Right cardiac atrium (tissue), 5 donors: ENCODE measurements at regions of chr17 and their contacts with region 1.

Region 1: DNA sequence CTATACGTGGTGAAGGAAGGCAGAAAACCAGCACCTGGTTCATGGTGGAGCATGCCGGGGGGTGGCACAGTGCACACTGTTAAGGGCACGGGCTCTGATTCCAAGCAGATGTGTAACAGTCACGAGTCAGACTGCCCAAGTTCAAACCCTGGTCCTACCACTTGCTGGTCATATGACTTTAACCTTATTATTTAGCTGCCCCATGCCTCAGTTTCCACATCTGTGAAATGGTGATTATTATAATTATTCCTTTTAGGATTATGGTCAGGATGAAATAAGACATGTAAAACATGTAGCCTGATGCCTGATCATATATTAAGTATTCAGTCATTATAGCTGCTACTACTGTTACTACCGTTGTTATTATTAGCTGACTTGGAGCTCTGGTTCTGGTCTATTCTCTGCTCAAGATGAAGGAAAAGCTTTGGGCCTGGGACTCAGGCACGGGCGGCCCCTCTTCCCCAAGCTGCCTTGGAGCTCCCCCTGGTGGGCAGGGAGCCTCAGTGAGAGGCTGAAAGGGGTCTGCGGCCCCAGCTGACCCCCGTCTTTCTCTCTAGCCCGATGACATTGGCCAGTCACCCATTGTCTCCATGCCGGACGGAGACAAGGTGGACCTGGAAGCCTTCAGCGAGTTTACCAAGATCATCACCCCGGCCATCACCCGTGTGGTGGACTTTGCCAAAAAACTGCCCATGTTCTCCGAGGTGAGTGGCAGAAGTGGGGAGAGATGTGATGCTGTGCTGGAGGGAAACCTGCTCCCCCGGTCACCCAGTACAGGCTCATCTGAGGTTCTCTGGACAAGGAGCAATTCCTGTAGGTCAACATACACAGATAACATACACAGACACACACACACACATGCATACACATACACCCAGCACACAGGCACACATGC is 14.0 kb downstream of the NR1D1 start:
- DNase-seq: peak in 2 of 3 donors; percentile 86 to 88
- ATAC-seq: peak in 1 of 2 donors; percentile 40
- H3K4me3 ChIP-seq: no peak overlapping the region
- H3K27ac ChIP-seq: peak overlapping the region; percentile 43
- H3K4me1 ChIP-seq: peaks cover 4% of the 10 kb centered on the region
- H3K27me3 ChIP-seq: no peaks in the 10 kb centered on the region

Region 2: DNA sequence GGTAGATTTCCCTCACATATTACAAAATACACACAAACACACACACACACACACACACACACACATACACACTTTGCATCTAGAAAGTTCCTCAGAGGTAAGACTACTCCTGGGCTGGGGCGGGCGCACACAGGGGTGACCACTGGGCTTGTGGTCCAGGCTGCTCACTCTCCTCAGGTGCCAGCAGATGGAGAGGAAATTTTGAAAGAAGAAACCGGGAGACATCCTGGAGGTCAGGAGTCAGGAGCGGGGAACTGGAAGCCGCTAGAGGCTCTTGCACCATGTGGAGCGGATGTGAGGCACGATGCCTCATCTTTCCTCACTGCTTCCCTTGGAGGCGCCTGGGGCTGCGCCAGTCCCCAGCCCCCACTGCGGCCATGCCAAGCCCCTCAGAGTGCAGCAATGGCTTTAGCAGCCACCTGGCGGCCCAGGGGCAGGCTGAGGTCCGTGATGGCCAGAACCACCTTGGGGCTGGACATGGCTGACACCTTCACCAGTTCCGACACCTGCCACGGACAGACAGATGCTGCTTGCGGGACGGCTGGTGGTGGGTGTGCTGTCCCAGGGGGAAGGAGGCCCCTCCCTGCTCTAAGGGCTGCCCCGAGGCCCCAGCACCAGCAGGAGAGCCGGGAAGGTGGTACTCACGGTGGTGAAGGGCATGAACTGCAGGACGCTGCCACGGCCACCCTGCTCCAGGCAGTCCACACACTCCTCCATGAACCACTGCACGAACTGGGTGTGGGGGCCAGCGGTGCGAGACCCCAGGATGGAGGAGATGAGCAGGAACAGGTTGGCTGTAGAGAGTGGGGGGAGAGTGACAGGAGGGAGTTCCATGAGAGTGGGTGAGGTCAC is 67.0 kb before region 1 on chr17:
- intact Hi-C with region 1: loop called in 2 of 4 experiments (anchors 10 kb)
- DNase-seq: peak; percentile 38 to 71 (median 65)
- ATAC-seq: no peak
- H3K4me3 ChIP-seq: no peak overlapping the region
- H3K27ac ChIP-seq: no peak overlapping the region
- H3K4me1 ChIP-seq: peaks cover 10% of the 10 kb centered on the region
- H3K27me3 ChIP-seq: no peaks in the 10 kb centered on the region

Region 3: DNA sequence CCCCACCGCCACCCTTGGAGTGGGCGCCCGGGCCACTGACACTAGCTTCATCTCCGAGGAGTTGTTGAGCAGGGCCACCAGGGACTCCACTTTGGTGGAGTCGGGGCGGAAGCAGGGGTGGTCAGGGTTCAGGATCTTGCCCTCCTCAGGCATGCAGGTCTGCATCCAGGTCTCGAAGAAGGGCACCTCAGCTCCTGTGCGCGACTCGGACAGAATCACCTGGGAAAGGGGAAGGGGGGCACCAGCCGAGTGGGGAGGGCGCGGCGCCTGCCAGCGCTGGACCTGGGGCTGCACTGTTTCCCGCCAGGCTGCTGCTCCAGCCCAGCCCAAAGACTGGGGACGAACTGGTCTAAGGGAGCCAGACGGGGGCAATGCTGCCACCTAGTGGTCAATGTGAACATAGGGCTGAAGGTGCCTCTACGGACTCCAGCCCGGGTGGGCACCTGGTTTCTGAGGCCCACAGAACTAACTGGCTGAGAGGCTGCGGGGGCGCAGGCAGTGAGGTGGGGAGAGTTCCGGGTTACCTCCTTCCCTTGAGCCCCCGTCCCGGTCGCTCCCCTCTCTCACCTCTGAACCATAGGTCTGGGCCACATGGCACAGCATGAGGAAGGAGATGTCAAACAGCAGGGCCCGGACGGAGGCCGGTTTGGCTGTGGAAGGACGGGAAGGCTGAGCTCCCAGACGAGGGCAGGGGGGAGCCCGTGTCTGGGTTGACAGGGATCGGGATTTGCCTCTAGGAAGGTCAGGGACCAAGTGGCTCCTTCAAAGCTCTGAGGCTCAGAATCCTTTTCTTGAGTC is 59.4 kb before region 1 on chr17:
- intact Hi-C with region 1: loop called in 1 of 4 experiments (anchors 10 kb)
- DNase-seq: peak; percentile 86 to 90 (median 90)
- ATAC-seq: peak; percentile 87 to 90
- H3K4me3 ChIP-seq: no peak overlapping the region
- H3K27ac ChIP-seq: no peak overlapping the region
- H3K4me1 ChIP-seq: no peaks in the 10 kb centered on the region
- H3K27me3 ChIP-seq: no peaks in the 10 kb centered on the region

Region 4: GRCh38 chr17:40038882-40039513 is 47.4 kb before region 1 on chr17:
- intact Hi-C with region 1: loop called in 1 of 4 experiments (anchors 5 kb)
- DNase-seq: peak; percentile 77 to 88 (median 86)
- ATAC-seq: peak; percentile 92 to 96
- H3K4me3 ChIP-seq: no peak overlapping the region
- H3K27ac ChIP-seq: peak overlapping the region; percentile 87
- H3K4me1 ChIP-seq: peaks cover 3% of the 10 kb centered on the region
- H3K27me3 ChIP-seq: no peaks in the 10 kb centered on the region

Region 5: GRCh38 chr17:40062329-40063186 is 23.8 kb before region 1 on chr17 and contains the start of gene THRA:
- intact Hi-C with region 1: loop called in 1 of 4 experiments (anchors 2 kb)
- DNase-seq: peak; percentile 73 to 93 (median 92)
- ATAC-seq: peak; percentile 63 to 75
- H3K4me3 ChIP-seq: peak within 1 kb of the TSS; percentile 84
- H3K27ac ChIP-seq: peak within 1 kb of the TSS; percentile 97
- H3K4me1 ChIP-seq: peaks cover 9% of the 10 kb centered on the region
- H3K27me3 ChIP-seq: no peaks in the 10 kb centered on the region
- total RNA-seq, gene THRA: 80.6 to 99.5 (median 95.9) TPM

Region 6: GRCh38 chr17:40153603-40154236 is 67.3 kb after region 1 on chr17:
- intact Hi-C with region 1: no loop called
- DNase-seq: no peak
- ATAC-seq: no peak
- H3K4me3 ChIP-seq: no peak overlapping the region
- H3K27ac ChIP-seq: no peak overlapping the region
- H3K4me1 ChIP-seq: peaks cover 5% of the 10 kb centered on the region
- H3K27me3 ChIP-seq: no peaks in the 10 kb centered on the region